Naive thymus-derived CD4-positive, alpha-beta T cell (primary cell): ENCODE measurements at regions of chr2 and their contacts with region 1.

Region 1: DNA sequence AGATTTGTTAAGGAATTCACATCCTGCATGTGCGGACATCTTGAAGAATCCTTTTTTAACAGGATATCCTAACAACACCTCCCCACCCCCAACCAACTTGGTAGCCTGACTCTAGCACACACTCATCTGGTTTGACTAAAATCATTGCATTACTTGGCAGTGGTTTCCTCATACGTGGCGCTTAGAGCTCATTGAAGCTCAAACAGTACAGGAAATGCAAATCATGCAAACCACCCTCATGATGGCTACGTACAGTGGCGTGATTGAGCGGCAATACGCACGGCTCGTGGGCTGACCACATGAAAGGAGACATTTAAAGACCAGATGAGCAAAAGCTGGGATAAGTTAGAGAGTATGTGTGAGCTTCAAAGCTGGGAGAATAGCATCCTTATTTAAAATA is 336.2 kb downstream of the ZEB2 start:
- DNase-seq: peak; percentile 12 to 78 (median 71)
- ATAC-seq: peak; percentile 98
- H3K4me3 ChIP-seq: no peak overlapping the region
- H3K4me3 Mint-ChIP-seq: peak overlapping the region; percentile 37 to 87 (median 79)
- H3K27ac ChIP-seq: no peak overlapping the region
- H3K27ac Mint-ChIP-seq: peak overlapping the region in 8 of 9 donors; percentile 8 to 89 (median 60)
- H3K4me1 ChIP-seq: peaks cover 9 to 30% of the 10 kb centered on the region in 2 donors
- H3K4me1 Mint-ChIP-seq: peaks cover 9 to 26% (median 13%) of the 10 kb centered on the region in 7 donors
- H3K27me3 ChIP-seq: no peaks in the 10 kb centered on the region
- H3K27me3 Mint-ChIP-seq: no peaks in the 10 kb centered on the region

Region 2: DNA sequence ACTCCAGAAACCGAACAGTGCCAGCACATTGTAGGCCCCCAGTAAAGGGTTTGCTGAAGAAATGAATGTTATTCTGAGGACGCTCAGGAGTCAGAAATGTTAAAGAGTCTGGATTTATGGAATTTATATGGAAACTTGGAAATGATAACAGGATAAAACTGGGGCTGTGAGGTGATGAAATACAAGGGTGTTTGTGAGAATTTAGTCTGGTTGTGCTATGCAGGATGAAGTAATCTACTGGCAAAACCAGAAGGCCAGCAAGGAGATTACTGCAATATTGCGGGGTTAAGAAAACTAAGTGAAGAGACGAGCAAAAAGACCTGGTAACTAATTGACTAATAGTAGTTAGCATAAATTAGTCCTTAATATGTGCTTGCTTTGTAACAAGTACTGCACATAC is 131.6 kb before region 1 on chr2:
- CTCF ChIA-PET with region 1: no interaction called
- POLR2A ChIA-PET with region 1: no interaction called
- intact Hi-C with region 1: no loop called
- DNase-seq: no peak
- ATAC-seq: no peak
- H3K4me3 ChIP-seq: no peak overlapping the region
- H3K4me3 Mint-ChIP-seq: no peak overlapping the region
- H3K27ac ChIP-seq: no peak overlapping the region
- H3K27ac Mint-ChIP-seq: no peak overlapping the region
- H3K4me1 ChIP-seq: no peaks in the 10 kb centered on the region
- H3K4me1 Mint-ChIP-seq: no peaks in the 10 kb centered on the region
- H3K27me3 ChIP-seq: no peaks in the 10 kb centered on the region
- H3K27me3 Mint-ChIP-seq: no peaks in the 10 kb centered on the region

Region 3: DNA sequence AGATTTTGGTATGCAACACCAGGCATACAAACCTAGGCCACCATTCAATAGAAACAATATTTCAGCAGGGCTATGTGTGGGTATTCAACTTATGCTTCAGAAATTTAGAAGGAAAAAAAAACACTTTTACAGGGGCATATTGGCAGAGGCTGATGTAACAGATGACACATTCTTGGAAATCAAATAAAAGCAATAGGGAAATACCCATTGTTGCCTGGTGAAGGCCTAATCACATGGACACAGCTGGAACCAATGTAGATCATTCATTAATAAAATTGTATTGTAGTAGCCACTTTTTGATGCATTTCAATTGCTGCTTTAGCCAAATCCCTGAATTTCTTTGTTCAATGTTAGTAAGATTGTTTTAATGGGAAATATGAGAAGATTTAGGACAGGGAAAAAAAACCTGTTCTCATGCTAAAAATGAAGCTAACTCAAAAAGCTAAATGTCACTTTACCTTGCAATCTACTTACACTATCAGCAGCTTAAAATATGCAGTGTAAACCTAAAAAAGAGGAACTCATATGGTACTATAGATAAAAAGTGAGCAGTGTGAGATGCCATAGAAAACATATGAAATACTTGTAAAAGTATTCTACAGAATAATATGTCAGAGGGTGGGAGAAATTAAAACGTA is 46.8 kb after region 1 on chr2:
- CTCF ChIA-PET with region 1: no interaction called
- POLR2A ChIA-PET with region 1: no interaction called
- intact Hi-C with region 1: loop called in 1 of 2 experiments (anchors 5 kb)
- DNase-seq: no peak
- ATAC-seq: no peak
- H3K4me3 ChIP-seq: no peak overlapping the region
- H3K4me3 Mint-ChIP-seq: no peak overlapping the region
- H3K27ac ChIP-seq: no peak overlapping the region
- H3K27ac Mint-ChIP-seq: no peak overlapping the region
- H3K4me1 ChIP-seq: peaks cover 0 to 24% of the 10 kb centered on the region in 2 donors
- H3K4me1 Mint-ChIP-seq: peaks cover 0 to 32% (median 6%) of the 10 kb centered on the region in 7 donors
- H3K27me3 ChIP-seq: no peaks in the 10 kb centered on the region
- H3K27me3 Mint-ChIP-seq: no peaks in the 10 kb centered on the region

Region 4: GRCh38 chr2:144382849-144383248 is 199.1 kb after region 1 on chr2:
- CTCF ChIA-PET with region 1: no interaction called
- POLR2A ChIA-PET with region 1: no interaction called
- intact Hi-C with region 1: loop called in 1 of 2 experiments (anchors 1 kb)
- DNase-seq: peak in 7 of 9 donors; percentile 31 to 68 (median 53)
- ATAC-seq: peak; percentile 90
- H3K4me3 ChIP-seq: no peak overlapping the region
- H3K4me3 Mint-ChIP-seq: peak overlapping the region in 8 of 10 donors; percentile 10 to 68 (median 46)
- H3K27ac ChIP-seq: no peak overlapping the region
- H3K27ac Mint-ChIP-seq: peak overlapping the region in 3 of 9 donors; percentile 15 to 54 (median 43)
- H3K4me1 ChIP-seq: peaks cover 8 to 24% of the 10 kb centered on the region in 2 donors
- H3K4me1 Mint-ChIP-seq: peaks cover 11 to 43% (median 25%) of the 10 kb centered on the region in 7 donors
- H3K27me3 ChIP-seq: no peaks in the 10 kb centered on the region
- H3K27me3 Mint-ChIP-seq: peaks cover 6 to 20% (median 13%) of the 10 kb centered on the region in 5 donors

Region 5: DNA sequence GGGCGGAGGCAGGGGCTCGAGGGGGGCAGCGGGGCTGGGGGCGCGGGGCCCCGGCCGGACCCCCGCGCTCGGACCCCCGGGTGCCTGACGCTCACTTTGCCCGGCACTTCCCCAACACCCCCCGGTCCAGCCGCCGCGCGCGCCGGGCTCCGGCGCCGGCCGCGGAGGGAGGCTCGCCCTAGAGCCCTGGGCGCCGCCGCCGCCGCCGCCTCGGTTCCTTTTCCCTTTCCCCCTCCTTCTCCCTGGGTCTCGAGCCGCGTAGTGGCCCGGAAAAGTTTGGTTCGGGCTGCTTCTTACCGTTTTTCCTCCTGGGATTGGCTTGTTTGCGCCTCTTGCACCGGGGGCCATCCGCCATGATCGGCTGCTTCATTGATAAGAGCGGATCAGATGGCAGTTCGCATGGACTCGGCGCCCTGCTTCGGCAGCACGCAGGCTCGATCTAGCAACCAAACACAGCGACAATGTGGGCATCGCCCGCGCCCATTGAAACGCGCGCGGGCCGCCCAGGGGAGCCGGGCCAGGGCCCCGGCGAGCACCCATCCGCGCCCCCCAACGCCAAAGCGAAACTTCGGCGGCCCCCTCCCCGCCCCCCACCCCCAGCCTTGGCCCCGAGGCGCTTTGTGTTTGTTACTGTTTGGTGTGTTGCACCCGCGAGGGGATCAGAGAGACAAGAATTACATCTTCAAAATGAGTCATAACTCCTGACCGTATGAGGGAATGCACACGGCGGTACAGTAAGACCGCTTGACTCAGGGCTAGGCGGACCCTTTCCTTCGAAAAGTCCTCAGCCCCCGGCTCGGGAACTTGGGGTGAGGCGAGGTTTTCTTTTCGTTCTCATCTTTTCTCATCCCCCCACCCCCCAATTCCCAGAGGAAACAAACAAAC is 333.5 kb after region 1 on chr2:
- CTCF ChIA-PET with region 1: no interaction called
- POLR2A ChIA-PET with region 1: no interaction called
- intact Hi-C with region 1: loop called in 1 of 2 experiments (anchors 5 kb)
- DNase-seq: peak in 6 of 9 donors; percentile 14 to 62 (median 32)
- ATAC-seq: peak; percentile 62
- H3K4me3 ChIP-seq: peak overlapping the region; percentile 49
- H3K4me3 Mint-ChIP-seq: no peak overlapping the region
- H3K27ac ChIP-seq: peak overlapping the region; percentile 37
- H3K27ac Mint-ChIP-seq: peak overlapping the region in 3 of 9 donors; percentile 46 to 85 (median 52)
- H3K4me1 ChIP-seq: peaks cover 21 to 22% of the 10 kb centered on the region in 2 donors
- H3K4me1 Mint-ChIP-seq: peaks cover 5 to 22% (median 18%) of the 10 kb centered on the region in 7 donors
- H3K27me3 ChIP-seq: peaks cover 0 to 33% of the 10 kb centered on the region in 2 donors
- H3K27me3 Mint-ChIP-seq: peaks cover 38 to 60% (median 52%) of the 10 kb centered on the region in 5 donors

Region 6: GRCh38 chr2:144694456-144694855 is 510.7 kb after region 1 on chr2:
- CTCF ChIA-PET with region 1: no interaction called
- POLR2A ChIA-PET with region 1: no interaction called
- intact Hi-C with region 1: no loop called
- DNase-seq: no peak
- ATAC-seq: no peak
- H3K4me3 ChIP-seq: no peak overlapping the region
- H3K4me3 Mint-ChIP-seq: no peak overlapping the region
- H3K27ac ChIP-seq: no peak overlapping the region
- H3K27ac Mint-ChIP-seq: no peak overlapping the region
- H3K4me1 ChIP-seq: no peaks in the 10 kb centered on the region
- H3K4me1 Mint-ChIP-seq: no peaks in the 10 kb centered on the region
- H3K27me3 ChIP-seq: no peaks in the 10 kb centered on the region
- H3K27me3 Mint-ChIP-seq: peaks cover 0 to 6% (median 0%) of the 10 kb centered on the region in 5 donors